Kidney (tissue), 22 donors: ENCODE measurements at regions of chr9 and their contacts with region 1.

Region 1: DNA sequence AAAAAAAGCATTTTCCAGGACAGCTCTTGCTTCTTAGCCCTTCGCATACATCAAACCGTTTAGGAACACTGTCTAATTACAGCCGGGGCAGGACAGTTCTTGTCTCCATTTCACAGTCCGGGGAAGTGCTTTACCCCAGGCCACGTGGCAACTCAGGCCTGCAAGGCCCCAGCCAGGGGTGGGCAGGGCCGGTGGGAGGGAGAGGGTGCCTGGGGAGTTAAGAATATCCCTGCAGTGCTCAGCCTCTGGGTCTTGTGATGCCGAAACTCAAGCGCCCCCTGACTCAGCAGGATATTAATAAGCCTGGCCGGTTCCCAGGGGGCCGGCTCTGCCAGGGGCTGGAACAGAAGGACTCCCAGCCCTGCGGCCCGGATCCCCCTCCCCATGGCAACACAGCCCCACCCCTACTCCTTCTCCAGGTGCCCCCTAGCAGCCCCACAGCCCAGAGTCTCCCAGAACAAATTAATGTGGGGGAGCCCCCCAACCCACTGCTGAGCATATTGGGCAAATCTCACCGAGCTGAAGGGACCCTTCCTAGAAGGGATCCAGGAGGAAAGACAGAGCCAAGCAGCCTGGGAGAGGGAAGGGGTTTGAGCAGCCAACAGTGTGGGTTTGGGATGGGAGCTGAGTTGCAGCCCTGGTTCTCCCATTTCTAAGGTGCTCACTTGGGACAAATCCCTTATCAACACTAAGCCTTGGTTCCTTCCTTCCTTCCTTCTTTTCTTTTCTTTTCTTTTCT is 45.3 kb downstream of the PLPP7 start:
- DNase-seq: peak in 3 of 5 donors; percentile 12 to 77 (median 35)
- H3K4me3 ChIP-seq: no peak overlapping the region
- H3K27ac ChIP-seq: no peak overlapping the region
- H3K4me1 ChIP-seq: no peaks in the 10 kb centered on the region
- H3K27me3 ChIP-seq: no peaks in the 10 kb centered on the region
- CTCF ChIP-seq: no peak

Region 2: DNA sequence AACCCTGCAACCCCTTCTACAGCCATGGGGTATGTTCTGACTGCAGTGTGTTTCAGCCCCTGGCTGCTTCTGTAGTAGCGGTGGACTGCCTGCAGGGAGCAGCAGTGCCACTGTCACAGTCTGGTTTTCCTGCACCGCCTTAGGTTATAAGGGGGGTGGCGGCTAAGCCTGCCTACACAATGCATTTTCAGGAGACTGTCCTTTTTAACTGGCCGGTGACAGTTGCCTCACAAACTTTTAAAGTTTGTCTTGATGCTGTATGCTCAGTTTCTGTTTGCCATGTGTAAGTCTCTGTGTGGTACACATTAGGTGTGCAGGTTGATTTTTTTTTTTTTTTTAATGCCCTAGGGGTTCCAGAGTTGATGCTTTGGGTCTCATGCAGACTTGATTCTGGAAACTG is 156.4 kb before region 1 on chr9:
- intact Hi-C with region 1: loop called (anchors 5 kb)
- DNase-seq: peak; percentile 61 to 73 (median 71)
- H3K4me3 ChIP-seq: no peak overlapping the region
- H3K27ac ChIP-seq: no peak overlapping the region
- H3K4me1 ChIP-seq: no peaks in the 10 kb centered on the region
- H3K27me3 ChIP-seq: no peaks in the 10 kb centered on the region
- CTCF ChIP-seq: peak; percentile 92